GM10248 (cell line): ENCODE measurements at regions of chr1 and their contacts with region 1.

Region 1: GRCh38 chr1:109532365-109533136 is 7.1 kb upstream of the GPR61 start:
- DNase-seq: peak; percentile 89
- CTCF ChIP-seq: peak; percentile 94

Region 2: GRCh38 chr1:109248797-109249642 is 283.5 kb before region 1 on chr1 and contains the start of gene CELSR2:
- CTCF ChIA-PET with region 1: interaction called, 12 read pairs
- POLR2A ChIA-PET with region 1: no interaction called
- DNase-seq: peak; percentile 88
- CTCF ChIP-seq: no peak

Region 3: DNA sequence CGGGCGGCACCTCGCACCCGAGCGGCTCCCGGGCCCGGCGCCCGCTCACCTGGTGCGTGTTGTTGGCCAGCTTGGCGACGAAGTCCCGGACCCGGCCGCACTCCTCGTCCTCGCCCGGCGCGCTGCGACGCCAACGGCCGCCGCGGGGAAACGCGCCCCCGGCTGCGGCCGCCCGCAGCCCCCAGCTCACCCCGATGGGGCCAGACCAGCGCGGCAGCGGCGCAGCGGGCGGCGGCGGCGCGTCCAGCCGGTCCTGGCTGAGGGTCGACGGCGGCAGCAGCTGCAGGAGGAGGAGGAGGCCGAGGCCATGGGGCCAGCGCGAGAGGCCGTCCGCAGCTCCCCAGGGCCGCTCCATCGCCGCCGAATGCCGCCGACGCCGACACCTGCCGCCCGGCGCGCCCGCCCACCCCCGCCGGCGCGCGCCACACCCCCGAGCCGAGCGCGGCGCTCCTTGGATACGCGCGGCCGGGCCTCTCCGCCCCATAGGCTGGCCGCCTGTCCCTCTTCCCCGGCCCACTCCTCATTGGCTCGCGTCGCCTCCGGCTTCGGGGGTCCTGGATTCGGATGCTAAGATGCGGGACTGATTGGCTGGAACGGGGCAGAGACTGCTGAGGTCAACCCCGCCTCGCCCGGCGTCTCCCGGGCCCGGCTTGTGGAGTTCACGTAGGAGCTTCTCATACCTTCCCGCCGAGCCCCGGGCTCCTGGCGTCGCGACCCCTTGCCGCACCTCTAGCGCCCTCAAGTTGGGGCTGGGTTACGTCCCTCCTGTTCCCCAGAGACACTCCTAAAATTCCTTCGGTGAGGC is 134.8 kb before region 1 on chr1 and contains the start of gene SORT1:
- CTCF ChIA-PET with region 1: interaction called, 45 read pairs
- POLR2A ChIA-PET with region 1: no interaction called
- DNase-seq: peak; percentile 71
- CTCF ChIP-seq: peak; percentile 7

Region 4: DNA sequence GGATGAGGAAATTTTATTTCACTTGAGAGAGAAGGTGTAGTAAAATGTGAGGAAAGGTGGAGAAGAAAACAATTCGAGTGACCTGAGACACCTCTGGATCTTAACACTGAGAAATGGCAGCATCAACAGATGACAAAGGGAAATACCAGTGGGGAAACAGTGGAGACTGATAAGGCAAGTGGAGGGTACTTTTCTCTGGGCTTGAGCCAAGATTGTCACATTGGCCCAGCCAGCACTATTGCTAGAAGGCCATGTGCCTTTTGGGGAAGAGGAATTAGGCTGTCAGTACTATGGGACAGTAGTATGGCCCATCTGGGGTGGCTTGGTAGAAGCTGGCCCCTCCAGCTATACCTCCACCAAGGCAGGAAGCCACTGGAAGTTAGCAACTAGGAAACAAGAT is 57.9 kb before region 1 on chr1:
- CTCF ChIA-PET with region 1: interaction called, 1,898 read pairs
- POLR2A ChIA-PET with region 1: no interaction called
- DNase-seq: no peak
- CTCF ChIP-seq: no peak

Region 5: GRCh38 chr1:109559995-109560394 is 27.4 kb after region 1 on chr1:
- CTCF ChIA-PET with region 1: interaction called, 15 read pairs
- POLR2A ChIA-PET with region 1: no interaction called
- DNase-seq: no peak
- CTCF ChIP-seq: no peak

Region 6: DNA sequence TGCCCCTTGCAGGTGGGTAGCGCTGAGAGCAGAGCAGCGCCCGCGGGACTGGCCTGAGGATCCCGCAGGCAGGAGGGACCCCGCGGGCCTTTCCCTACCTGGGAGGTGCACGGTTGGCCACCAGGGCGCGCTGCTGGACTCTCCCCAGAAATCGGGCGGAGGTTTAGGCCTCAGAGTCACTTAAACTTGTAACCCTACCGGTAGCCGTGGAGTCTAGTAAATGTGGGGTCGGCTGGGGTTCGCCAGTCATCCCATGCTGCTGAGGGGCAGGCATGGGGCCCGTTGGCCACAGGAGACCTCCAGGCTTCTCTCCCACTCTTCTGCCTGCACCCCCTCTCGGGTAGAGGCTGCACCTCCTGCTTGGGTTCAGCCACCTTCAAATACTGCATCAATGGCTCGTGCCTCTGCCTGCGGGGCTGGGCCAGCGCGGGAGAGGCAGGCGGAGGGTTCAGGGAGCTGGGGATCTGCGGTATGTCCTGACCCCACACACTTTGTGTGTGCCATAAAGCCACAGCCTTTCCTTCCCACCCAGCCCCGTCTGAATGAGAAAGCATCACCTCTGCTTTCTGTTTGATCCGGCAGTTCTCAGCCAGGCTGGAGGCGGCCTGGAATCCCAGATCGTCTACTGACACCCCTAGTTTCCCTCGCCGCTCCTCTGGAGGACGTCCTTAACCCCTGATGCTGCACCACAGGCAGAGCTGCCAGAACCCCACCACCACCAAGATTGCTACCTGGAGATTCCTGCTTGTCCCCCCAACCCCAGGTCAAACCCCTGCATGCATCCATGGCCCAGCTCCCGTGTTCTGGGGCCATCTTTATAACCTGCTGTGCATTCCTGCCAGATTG is 111.1 kb after region 1 on chr1:
- CTCF ChIA-PET with region 1: interaction called, 31 read pairs
- POLR2A ChIA-PET with region 1: no interaction called
- DNase-seq: peak; percentile 88
- CTCF ChIP-seq: peak; percentile 92